ENCODE measurements at regions of chr20 and their contacts with region 1.

Region 1: GRCh38 chr20:3865887-3866407 is 19.3 kb downstream of the MAVS start:
- DNase-seq: no peak
- ATAC-seq: no peak
- H3K4me3 ChIP-seq: no peak overlapping the region
- H3K4me3 Mint-ChIP-seq: no peak overlapping the region
- H3K27ac ChIP-seq: no peak overlapping the region
- H3K27ac Mint-ChIP-seq: no peak overlapping the region
- H3K4me1 ChIP-seq: peaks cover 0 to 3% of the 10 kb centered on the region in 2 experiments
- H3K4me1 Mint-ChIP-seq: no peaks in the 10 kb centered on the region
- H3K27me3 ChIP-seq: no peaks in the 10 kb centered on the region
- H3K27me3 Mint-ChIP-seq: no peaks in the 10 kb centered on the region

Region 2: DNA sequence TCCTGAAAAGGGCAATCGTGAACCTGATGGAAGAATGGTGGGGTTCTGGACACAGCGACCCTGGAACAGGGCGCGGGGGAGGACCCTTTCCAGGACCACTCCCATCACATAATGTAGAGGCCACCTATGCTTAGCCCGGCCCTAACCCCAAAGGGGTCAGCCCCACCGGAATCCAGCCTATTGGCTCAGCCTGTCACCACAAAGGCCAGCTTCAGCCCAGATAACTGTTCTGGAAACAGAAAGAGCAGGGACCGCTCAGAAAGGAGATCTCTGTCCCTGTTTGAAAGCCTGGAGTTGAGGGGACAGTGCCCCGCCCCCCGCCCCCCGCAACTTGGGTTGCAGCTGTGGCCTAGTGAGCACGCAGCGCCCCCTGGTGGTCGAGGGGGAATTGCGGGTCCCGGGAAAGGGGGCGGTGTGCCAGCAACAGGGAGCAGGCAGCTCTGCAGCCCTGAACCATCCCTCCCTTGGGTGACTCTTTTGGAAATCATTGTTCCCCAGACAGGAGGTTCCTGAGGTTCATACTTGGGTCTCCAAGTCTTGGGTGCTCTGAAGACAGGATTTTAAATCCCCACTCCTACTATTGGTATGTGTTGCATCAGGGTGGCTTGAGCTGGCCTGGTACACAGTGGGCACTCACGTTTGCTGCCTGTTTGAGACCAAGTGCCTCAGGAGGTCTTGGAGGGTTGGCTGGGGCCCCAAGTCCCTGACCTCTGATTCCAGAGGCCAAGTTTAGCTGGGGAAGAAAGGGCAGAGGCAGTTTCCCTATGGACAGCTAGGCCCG is 155.1 kb before region 1 on chr20:
- CTCF ChIA-PET with region 1: no interaction called
- POLR2A ChIA-PET with region 1: no interaction called
- DNase-seq: peak; percentile 9 to 80 (median 65)
- ATAC-seq: peak; percentile 46 to 68 (median 58)
- H3K4me3 ChIP-seq: no peak overlapping the region
- H3K4me3 Mint-ChIP-seq: no peak overlapping the region
- H3K27ac ChIP-seq: no peak overlapping the region
- H3K27ac Mint-ChIP-seq: no peak overlapping the region
- H3K4me1 ChIP-seq: no peaks in the 10 kb centered on the region
- H3K4me1 Mint-ChIP-seq: no peaks in the 10 kb centered on the region
- H3K27me3 ChIP-seq: peaks cover 0 to 43% of the 10 kb centered on the region in 2 experiments
- H3K27me3 Mint-ChIP-seq: peaks cover 6 to 8% of the 10 kb centered on the region in 2 donors

Region 3: DNA sequence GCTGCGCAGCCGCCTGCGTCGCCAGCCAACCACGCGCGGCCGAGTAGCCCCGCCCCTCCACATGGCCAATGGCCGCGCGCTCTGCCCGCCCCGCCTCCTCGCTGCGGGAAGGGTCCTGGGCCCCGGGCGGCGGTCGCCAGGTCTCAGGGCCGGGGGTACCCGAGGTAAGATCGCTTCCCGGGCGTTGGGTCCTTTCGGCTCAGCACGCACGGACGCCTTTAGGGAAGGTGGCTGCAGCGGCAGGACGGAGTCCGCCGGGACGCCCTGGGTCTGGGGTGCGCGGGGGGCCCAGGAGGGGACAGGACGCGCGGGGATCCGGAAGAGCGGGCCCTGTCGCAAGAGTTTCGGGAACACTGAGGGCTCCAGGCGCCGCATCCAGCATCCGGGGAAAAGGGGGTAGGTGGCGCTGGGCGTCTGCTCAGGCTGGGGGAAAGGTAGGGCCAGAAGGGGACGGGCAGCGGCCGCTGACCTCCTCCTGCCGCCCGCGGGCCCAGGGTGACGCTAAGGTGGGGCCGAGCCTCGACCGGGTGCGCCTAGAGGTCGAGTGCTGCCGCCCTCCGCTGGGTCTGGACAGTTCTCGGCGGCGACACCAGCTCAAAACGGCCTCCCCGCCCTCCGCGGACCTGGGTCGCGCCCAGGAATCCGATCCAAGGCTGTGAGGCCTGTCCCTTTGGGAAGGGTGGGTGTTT is 19.1 kb before region 1 on chr20 and contains the start of gene MAVS:
- CTCF ChIA-PET with region 1: interaction called in 1 of 2 experiments, 4 read pairs
- POLR2A ChIA-PET with region 1: interaction called in 1 of 2 experiments, 22 read pairs
- DNase-seq: peak in 33 of 35 experiments; percentile 61 to 91 (median 78)
- ATAC-seq: peak; percentile 99 to 100 (median 99)
- H3K4me3 ChIP-seq: peak within 1 kb of the TSS; percentile 73 to 98
- H3K4me3 Mint-ChIP-seq: peak within 1 kb of the TSS; percentile 85 to 90 (median 86)
- H3K27ac ChIP-seq: peak within 1 kb of the TSS; percentile 84
- H3K27ac Mint-ChIP-seq: peak within 1 kb of the TSS; percentile 80 to 91
- H3K4me1 ChIP-seq: peaks cover 2 to 27% of the 10 kb centered on the region in 2 experiments
- H3K4me1 Mint-ChIP-seq: peaks cover 27 to 31% (median 27%) of the 10 kb centered on the region in 3 donors
- H3K27me3 ChIP-seq: no peaks in the 10 kb centered on the region
- H3K27me3 Mint-ChIP-seq: no peaks in the 10 kb centered on the region
- total RNA-seq, gene MAVS: 25.7 to 46.9 (median 43.3) TPM

Measured in T-cell (primary cell).